ENCODE measurements at regions of chr6 and their contacts with region 1.

Region 1: GRCh38 chr6:159979136-159979874 is 10.4 kb downstream of the IGF2R start:
- DNase-seq: peak; percentile 64
- ATAC-seq: peak; percentile 82
- H3K4me3 ChIP-seq: no peak overlapping the region
- H3K4me3 Mint-ChIP-seq: peak overlapping the region; percentile 35
- H3K27ac ChIP-seq: no peak overlapping the region
- H3K27ac Mint-ChIP-seq: peak overlapping the region; percentile 82
- H3K4me1 ChIP-seq: peaks cover 61 to 73% of the 10 kb centered on the region in 2 donors
- H3K4me1 Mint-ChIP-seq: peaks cover 82% of the 10 kb centered on the region
- H3K27me3 ChIP-seq: no peaks in the 10 kb centered on the region
- H3K27me3 Mint-ChIP-seq: no peaks in the 10 kb centered on the region
- CTCF ChIP-seq: no peak

Region 2: GRCh38 chr6:159968440-159969203 is 10.7 kb before region 1 on chr6 and contains the start of gene IGF2R:
- CTCF ChIA-PET with region 1: interaction called, 4 read pairs
- POLR2A ChIA-PET with region 1: interaction called, 7 read pairs
- intact Hi-C with region 1: loop called (anchors 1 kb)
- DNase-seq: peak; percentile 94
- ATAC-seq: peak; percentile 87
- H3K4me3 ChIP-seq: peak within 1 kb of the TSS; percentile 54 to 85 (median 63)
- H3K4me3 Mint-ChIP-seq: peak within 1 kb of the TSS; percentile 92
- H3K27ac ChIP-seq: peak within 1 kb of the TSS; percentile 73 to 75
- H3K27ac Mint-ChIP-seq: peak within 1 kb of the TSS; percentile 92
- H3K4me1 ChIP-seq: peaks cover 12 to 25% of the 10 kb centered on the region in 2 donors
- H3K4me1 Mint-ChIP-seq: peaks cover 36% of the 10 kb centered on the region
- H3K27me3 ChIP-seq: no peaks in the 10 kb centered on the region
- H3K27me3 Mint-ChIP-seq: no peaks in the 10 kb centered on the region
- CTCF ChIP-seq: no peak
- total RNA-seq, gene IGF2R: 53.3 and 58.0 TPM in 2 replicates

Region 3: DNA sequence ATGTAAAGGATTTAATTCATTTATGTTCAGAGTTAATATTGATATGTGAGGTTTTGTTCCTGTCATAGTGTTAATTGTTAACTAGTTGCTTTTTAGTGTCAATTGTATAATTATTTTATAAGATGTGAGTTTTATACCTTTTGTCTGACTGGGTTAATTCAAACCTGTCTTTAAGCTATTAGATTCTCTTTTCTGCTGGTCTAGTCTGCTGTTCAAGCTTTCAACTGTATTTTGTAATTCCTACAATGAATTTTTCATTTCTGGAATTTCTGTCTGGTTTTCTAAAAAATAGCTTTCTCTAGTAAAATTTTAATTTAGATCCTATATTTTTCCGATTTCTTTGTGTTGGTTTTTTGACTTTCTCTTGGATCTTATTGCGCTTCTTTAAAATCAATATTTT is 16.1 kb after region 1 on chr6:
- CTCF ChIA-PET with region 1: no interaction called
- POLR2A ChIA-PET with region 1: no interaction called
- intact Hi-C with region 1: loop called (anchors 2 kb)
- DNase-seq: no peak
- ATAC-seq: no peak
- H3K4me3 ChIP-seq: no peak overlapping the region
- H3K4me3 Mint-ChIP-seq: no peak overlapping the region
- H3K27ac ChIP-seq: no peak overlapping the region
- H3K27ac Mint-ChIP-seq: no peak overlapping the region
- H3K4me1 ChIP-seq: no peaks in the 10 kb centered on the region
- H3K4me1 Mint-ChIP-seq: peaks cover 16% of the 10 kb centered on the region
- H3K27me3 ChIP-seq: no peaks in the 10 kb centered on the region
- H3K27me3 Mint-ChIP-seq: no peaks in the 10 kb centered on the region
- CTCF ChIP-seq: no peak

Region 4: GRCh38 chr6:160015778-160016684 is 36.7 kb after region 1 on chr6:
- CTCF ChIA-PET with region 1: no interaction called
- POLR2A ChIA-PET with region 1: no interaction called
- intact Hi-C with region 1: loop called (anchors 5 kb)
- DNase-seq: no peak
- ATAC-seq: no peak
- H3K4me3 ChIP-seq: no peak overlapping the region
- H3K4me3 Mint-ChIP-seq: no peak overlapping the region
- H3K27ac ChIP-seq: no peak overlapping the region
- H3K27ac Mint-ChIP-seq: no peak overlapping the region
- H3K4me1 ChIP-seq: peaks cover 0 to 19% of the 10 kb centered on the region in 2 donors
- H3K4me1 Mint-ChIP-seq: peaks cover 11% of the 10 kb centered on the region
- H3K27me3 ChIP-seq: no peaks in the 10 kb centered on the region
- H3K27me3 Mint-ChIP-seq: no peaks in the 10 kb centered on the region
- CTCF ChIP-seq: no peak

Region 5: DNA sequence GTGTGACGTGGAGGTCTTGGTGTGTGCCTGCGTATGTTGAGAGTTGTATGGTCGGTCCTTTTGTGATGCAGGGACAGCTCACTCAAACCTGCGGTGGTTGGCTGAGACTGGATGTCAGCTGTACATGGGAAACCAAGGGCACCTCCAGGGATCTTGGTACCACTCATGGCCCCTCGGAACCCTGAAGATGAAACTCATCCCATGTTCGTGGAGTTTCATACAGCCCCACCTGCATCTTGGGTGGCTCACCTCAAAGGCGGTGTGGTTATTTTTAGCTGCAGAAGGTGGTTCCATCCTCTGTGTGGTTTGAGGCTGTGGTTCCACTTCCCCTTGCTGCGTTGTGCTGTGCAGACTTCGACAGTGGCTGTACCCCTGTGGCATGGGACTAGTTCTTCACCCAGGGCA is 89.7 kb after region 1 on chr6:
- CTCF ChIA-PET with region 1: no interaction called
- POLR2A ChIA-PET with region 1: no interaction called
- intact Hi-C with region 1: loop called (anchors 5 kb)
- DNase-seq: peak; percentile 85
- ATAC-seq: peak; percentile 88
- H3K4me3 ChIP-seq: peak overlapping the region in 3 of 5 experiments; percentile 10 to 35 (median 31)
- H3K4me3 Mint-ChIP-seq: peak overlapping the region; percentile 68
- H3K27ac ChIP-seq: peak overlapping the region in 1 of 2 donors; percentile 24
- H3K27ac Mint-ChIP-seq: peak overlapping the region; percentile 39
- H3K4me1 ChIP-seq: peaks cover 29 to 48% of the 10 kb centered on the region in 2 donors
- H3K4me1 Mint-ChIP-seq: peaks cover 39% of the 10 kb centered on the region
- H3K27me3 ChIP-seq: no peaks in the 10 kb centered on the region
- H3K27me3 Mint-ChIP-seq: no peaks in the 10 kb centered on the region
- CTCF ChIP-seq: no peak

Region 6: DNA sequence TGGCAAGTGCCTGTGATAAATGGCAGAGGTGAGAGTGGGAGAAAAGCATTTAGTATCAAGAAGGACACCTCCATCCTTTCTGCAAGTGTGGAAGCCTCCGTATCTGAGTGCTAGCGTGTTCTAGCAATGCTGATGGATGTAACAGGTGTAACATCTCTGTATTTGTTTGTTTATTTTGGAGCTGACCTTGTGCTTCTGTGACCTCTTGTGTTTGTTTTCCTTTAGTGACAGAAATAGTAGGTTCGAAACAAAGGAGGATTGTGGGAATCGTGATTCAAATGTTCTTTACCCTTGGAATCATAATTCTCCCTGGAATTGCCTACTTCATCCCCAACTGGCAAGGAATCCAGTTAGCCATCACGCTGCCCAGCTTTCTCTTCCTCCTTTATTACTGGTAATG is 429.2 kb after region 1 on chr6:
- CTCF ChIA-PET with region 1: no interaction called
- POLR2A ChIA-PET with region 1: no interaction called
- intact Hi-C with region 1: no loop called
- DNase-seq: no peak
- ATAC-seq: no peak
- H3K4me3 ChIP-seq: no peak overlapping the region
- H3K4me3 Mint-ChIP-seq: no peak overlapping the region
- H3K27ac ChIP-seq: no peak overlapping the region
- H3K27ac Mint-ChIP-seq: no peak overlapping the region
- H3K4me1 ChIP-seq: no peaks in the 10 kb centered on the region
- H3K4me1 Mint-ChIP-seq: no peaks in the 10 kb centered on the region
- H3K27me3 ChIP-seq: peaks cover 0 to 7% (median 0%) of the 10 kb centered on the region in 4 experiments
- H3K27me3 Mint-ChIP-seq: peaks cover 3% of the 10 kb centered on the region
- CTCF ChIP-seq: no peak

Measured in B cell (primary cell).